ENCODE measurements at regions of chr14 and their contacts with region 1.

Region 1: GRCh38 chr14:30521899-30522736 is 36.8 kb upstream of the G2E3 start:
- DNase-seq: peak in 1 of 2 experiments; percentile 20
- H3K4me3 ChIP-seq: no peak overlapping the region
- H3K4me3 Mint-ChIP-seq: no peak overlapping the region
- H3K27ac Mint-ChIP-seq: no peak overlapping the region
- H3K4me1 ChIP-seq: no peaks in the 10 kb centered on the region
- H3K4me1 Mint-ChIP-seq: no peaks in the 10 kb centered on the region
- H3K27me3 ChIP-seq: no peaks in the 10 kb centered on the region
- H3K27me3 Mint-ChIP-seq: peaks cover 7% of the 10 kb centered on the region
- CTCF ChIP-seq: peak; percentile 61 to 69

Region 2: GRCh38 chr14:30462358-30462757 is 59.8 kb before region 1 on chr14:
- CTCF ChIA-PET with region 1: no interaction called
- POLR2A ChIA-PET with region 1: no interaction called
- intact Hi-C with region 1: loop called (anchors 5 kb)
- DNase-seq: no peak
- H3K4me3 ChIP-seq: no peak overlapping the region
- H3K4me3 Mint-ChIP-seq: no peak overlapping the region
- H3K27ac Mint-ChIP-seq: no peak overlapping the region
- H3K4me1 ChIP-seq: no peaks in the 10 kb centered on the region
- H3K4me1 Mint-ChIP-seq: no peaks in the 10 kb centered on the region
- H3K27me3 ChIP-seq: no peaks in the 10 kb centered on the region
- H3K27me3 Mint-ChIP-seq: no peaks in the 10 kb centered on the region
- CTCF ChIP-seq: no peak

Region 3: DNA sequence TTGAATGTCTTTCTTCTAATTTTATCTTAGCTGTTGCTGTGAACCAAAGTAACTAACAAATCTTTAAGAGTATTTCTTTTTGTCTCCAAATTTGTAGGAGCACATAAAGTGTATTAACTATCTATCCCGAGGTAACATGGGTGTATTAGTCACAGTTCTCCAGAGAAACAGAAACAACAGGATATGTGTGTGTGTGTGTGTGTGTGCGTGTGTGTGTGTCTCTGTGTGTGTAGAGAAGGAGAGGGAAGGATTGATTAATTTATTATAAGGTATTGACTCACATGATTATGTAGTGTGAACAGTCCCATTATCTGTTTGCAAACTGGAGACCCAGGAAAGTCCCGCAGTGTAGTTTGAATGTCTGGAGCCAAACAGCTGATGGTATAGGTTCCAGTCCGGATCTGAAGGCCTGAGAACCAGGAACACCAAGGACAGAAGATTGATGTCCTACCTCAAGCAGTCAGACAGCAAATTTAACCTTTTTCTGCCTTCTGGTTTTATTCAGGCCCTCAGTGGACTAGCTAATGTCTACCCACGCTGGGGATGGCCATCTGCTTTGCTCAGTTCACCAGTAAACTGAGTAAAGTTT is 51.2 kb after region 1 on chr14:
- CTCF ChIA-PET with region 1: no interaction called
- POLR2A ChIA-PET with region 1: no interaction called
- intact Hi-C with region 1: no loop called
- DNase-seq: no peak
- H3K4me3 ChIP-seq: no peak overlapping the region
- H3K4me3 Mint-ChIP-seq: no peak overlapping the region
- H3K27ac Mint-ChIP-seq: no peak overlapping the region
- H3K4me1 ChIP-seq: peaks cover 14% of the 10 kb centered on the region
- H3K4me1 Mint-ChIP-seq: peaks cover 32% of the 10 kb centered on the region
- H3K27me3 ChIP-seq: no peaks in the 10 kb centered on the region
- H3K27me3 Mint-ChIP-seq: no peaks in the 10 kb centered on the region
- CTCF ChIP-seq: no peak